Caco-2 (cell line): ENCODE measurements at regions of chr13 and their contacts with region 1.

Region 1: DNA sequence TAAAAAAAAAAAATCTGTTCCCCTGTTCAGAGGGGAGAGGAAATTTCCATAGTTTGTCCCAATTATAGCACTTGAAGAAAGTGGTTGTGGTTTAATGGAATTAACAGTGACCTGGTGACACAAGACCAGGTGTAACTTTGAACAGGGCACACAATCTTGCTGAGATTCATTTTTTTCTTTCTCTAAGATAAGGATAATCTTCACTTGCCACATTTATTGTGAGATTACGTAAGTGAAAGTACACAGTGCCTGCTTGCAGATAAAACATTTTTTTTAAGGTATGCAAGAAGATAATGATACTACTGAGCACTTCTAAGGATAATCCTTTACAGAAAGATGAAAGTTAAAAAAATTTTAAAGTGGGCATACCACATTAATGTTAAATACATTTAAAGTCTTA is 448.1 kb downstream of the DIAPH3 start:
- DNase-seq: peak in 1 of 2 experiments; percentile 60
- H3K4me3 ChIP-seq: no peak overlapping the region
- H3K4me3 Mint-ChIP-seq: no peak overlapping the region
- H3K27ac Mint-ChIP-seq: peak overlapping the region; percentile 72
- H3K4me1 ChIP-seq: peaks cover 82% of the 10 kb centered on the region
- H3K4me1 Mint-ChIP-seq: peaks cover 13% of the 10 kb centered on the region
- H3K27me3 ChIP-seq: no peaks in the 10 kb centered on the region
- H3K27me3 Mint-ChIP-seq: no peaks in the 10 kb centered on the region
- CTCF ChIP-seq: no peak

Region 2: GRCh38 chr13:59684105-59684504 is 31.5 kb before region 1 on chr13:
- CTCF ChIA-PET with region 1: interaction called, 5 read pairs
- POLR2A ChIA-PET with region 1: no interaction called
- intact Hi-C with region 1: loop called (anchors 1 kb)
- DNase-seq: no peak
- H3K4me3 ChIP-seq: no peak overlapping the region
- H3K4me3 Mint-ChIP-seq: no peak overlapping the region
- H3K27ac Mint-ChIP-seq: peak overlapping the region; percentile 4
- H3K4me1 ChIP-seq: peaks cover 90% of the 10 kb centered on the region
- H3K4me1 Mint-ChIP-seq: peaks cover 48% of the 10 kb centered on the region
- H3K27me3 ChIP-seq: no peaks in the 10 kb centered on the region
- H3K27me3 Mint-ChIP-seq: no peaks in the 10 kb centered on the region
- CTCF ChIP-seq: no peak

Region 3: GRCh38 chr13:59701261-59701660 is 14.3 kb before region 1 on chr13:
- CTCF ChIA-PET with region 1: no interaction called
- POLR2A ChIA-PET with region 1: no interaction called
- intact Hi-C with region 1: loop called (anchors 1 kb)
- DNase-seq: peak; percentile 31 to 47
- H3K4me3 ChIP-seq: no peak overlapping the region
- H3K4me3 Mint-ChIP-seq: peak overlapping the region; percentile 46
- H3K27ac Mint-ChIP-seq: peak overlapping the region; percentile 31
- H3K4me1 ChIP-seq: peaks cover 66% of the 10 kb centered on the region
- H3K4me1 Mint-ChIP-seq: peaks cover 48% of the 10 kb centered on the region
- H3K27me3 ChIP-seq: no peaks in the 10 kb centered on the region
- H3K27me3 Mint-ChIP-seq: no peaks in the 10 kb centered on the region
- CTCF ChIP-seq: no peak

Region 4: DNA sequence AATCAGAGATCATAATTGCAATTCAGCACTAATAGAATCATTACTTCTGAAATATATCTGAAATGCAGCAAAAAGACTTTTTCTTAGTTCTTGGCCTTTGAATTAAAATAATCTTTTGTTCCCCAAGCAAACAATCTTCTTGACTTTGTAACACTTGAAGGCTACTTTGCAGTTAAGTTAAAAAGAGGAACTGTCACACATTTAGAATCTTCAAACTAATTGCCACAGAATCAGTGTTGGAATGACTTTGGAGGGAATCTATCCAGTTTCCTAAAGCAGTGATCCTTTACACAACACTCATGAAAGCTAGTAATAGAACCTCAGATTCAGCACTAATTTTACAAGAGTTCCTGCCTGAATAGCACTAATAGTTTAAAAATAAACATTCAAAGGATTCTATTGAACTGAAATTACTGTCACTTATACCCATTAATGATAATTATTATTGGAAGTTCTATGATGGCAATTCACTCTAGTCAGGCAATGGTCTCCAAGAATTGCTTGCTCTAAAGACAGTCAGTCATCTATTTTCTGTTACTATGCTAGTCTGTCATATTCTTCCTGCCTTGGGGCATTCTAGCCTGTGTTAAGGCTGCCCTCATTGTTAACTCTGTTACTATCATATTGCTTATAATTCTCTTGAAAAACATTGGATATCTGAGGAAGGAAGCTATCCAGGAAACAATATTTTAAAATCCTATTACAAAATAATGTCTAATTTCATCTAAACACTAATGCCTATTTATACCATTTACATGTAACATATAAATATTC is 85.7 kb after region 1 on chr13:
- CTCF ChIA-PET with region 1: no interaction called
- POLR2A ChIA-PET with region 1: no interaction called
- intact Hi-C with region 1: no loop called
- DNase-seq: no peak
- H3K4me3 ChIP-seq: no peak overlapping the region
- H3K4me3 Mint-ChIP-seq: no peak overlapping the region
- H3K27ac Mint-ChIP-seq: no peak overlapping the region
- H3K4me1 ChIP-seq: no peaks in the 10 kb centered on the region
- H3K4me1 Mint-ChIP-seq: peaks cover 6% of the 10 kb centered on the region
- H3K27me3 ChIP-seq: no peaks in the 10 kb centered on the region
- H3K27me3 Mint-ChIP-seq: no peaks in the 10 kb centered on the region
- CTCF ChIP-seq: no peak

Region 5: DNA sequence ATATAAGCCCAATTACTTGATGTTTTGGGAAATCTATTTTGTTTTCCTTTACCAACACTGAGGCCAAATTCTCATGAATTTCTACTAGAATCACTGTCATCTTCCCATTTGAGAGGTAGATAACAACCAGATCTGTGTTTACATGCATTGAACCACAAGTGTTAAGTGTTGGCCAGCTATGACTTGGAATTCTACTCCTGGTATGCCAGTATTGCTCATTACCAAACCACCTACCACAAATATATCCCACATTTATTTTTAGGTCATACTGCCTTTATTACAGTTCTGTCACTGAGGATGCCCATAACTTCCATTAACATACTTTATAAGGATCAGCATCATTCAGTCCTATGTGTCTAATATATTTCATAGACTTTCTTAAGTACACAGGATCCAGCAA is 119.2 kb after region 1 on chr13:
- CTCF ChIA-PET with region 1: no interaction called
- POLR2A ChIA-PET with region 1: no interaction called
- intact Hi-C with region 1: loop called (anchors 1 kb)
- DNase-seq: no peak
- H3K4me3 ChIP-seq: no peak overlapping the region
- H3K4me3 Mint-ChIP-seq: peak overlapping the region; percentile 46
- H3K27ac Mint-ChIP-seq: peak overlapping the region; percentile 97
- H3K4me1 ChIP-seq: peaks cover 59% of the 10 kb centered on the region
- H3K4me1 Mint-ChIP-seq: peaks cover 28% of the 10 kb centered on the region
- H3K27me3 ChIP-seq: no peaks in the 10 kb centered on the region
- H3K27me3 Mint-ChIP-seq: no peaks in the 10 kb centered on the region
- CTCF ChIP-seq: no peak